ENCODE measurements at regions of chr17 and their contacts with region 1.

Region 1: GRCh38 chr17:73311781-73312641 is at the start of gene CDC42EP4:
- DNase-seq: peak; percentile 59 to 89 (median 82)
- ATAC-seq: peak; percentile 90
- H3K4me3 ChIP-seq: peak within 1 kb of the TSS; percentile 61 to 86
- H3K4me3 Mint-ChIP-seq: peak within 1 kb of the TSS; percentile 87
- H3K27ac ChIP-seq: peak within 1 kb of the TSS; percentile 11 to 64
- H3K27ac Mint-ChIP-seq: peak within 1 kb of the TSS; percentile 62
- H3K4me1 ChIP-seq: peaks cover 14% of the 10 kb centered on the region
- H3K4me1 Mint-ChIP-seq: peaks cover 17% of the 10 kb centered on the region
- H3K27me3 ChIP-seq: no peaks in the 10 kb centered on the region
- H3K27me3 Mint-ChIP-seq: no peaks in the 10 kb centered on the region
- CTCF ChIP-seq: no peak
- total RNA-seq, gene CDC42EP4: 3.5 to 4.4 TPM

Region 2: DNA sequence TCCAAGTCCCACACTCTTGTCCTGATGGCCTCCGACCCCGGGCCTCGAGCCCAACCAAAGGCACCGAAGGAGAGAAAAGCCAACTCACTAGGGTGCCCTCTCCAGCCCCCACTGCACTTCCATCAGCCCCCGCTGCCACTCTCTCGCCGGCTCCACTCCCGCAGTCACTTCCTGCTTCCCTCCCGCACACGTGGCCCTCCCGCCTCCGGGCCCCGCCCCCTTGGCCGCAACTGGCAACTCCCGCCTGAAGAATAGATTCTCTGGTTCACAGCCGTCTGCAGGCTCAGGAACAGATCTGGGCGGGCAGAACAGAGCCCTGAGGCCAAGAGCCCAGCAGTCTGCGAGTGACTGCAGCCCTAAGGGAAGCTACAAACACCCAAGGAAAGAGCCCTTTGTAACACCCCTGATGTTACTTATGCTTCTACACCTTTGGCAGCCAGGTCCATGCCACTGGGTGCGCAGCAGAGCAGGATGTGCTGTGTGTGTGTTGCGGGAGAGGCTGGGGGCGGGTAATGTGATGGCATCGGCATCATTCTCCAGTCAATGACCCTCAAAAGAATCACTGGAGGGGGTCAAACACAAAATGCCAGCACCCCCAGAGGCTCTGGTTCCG is 219.4 kb before region 1 on chr17 and contains the start of gene SLC39A11:
- CTCF ChIA-PET with region 1: no interaction called
- POLR2A ChIA-PET with region 1: no interaction called
- intact Hi-C with region 1: loop called in 1 of 2 experiments (anchors 5 kb)
- DNase-seq: peak; percentile 72 to 95 (median 89)
- ATAC-seq: peak; percentile 95
- H3K4me3 ChIP-seq: peak within 1 kb of the TSS; percentile 73 to 74
- H3K4me3 Mint-ChIP-seq: peak within 1 kb of the TSS; percentile 98
- H3K27ac ChIP-seq: peak within 1 kb of the TSS; percentile 41 to 58
- H3K27ac Mint-ChIP-seq: peak within 1 kb of the TSS; percentile 94
- H3K4me1 ChIP-seq: peaks cover 17% of the 10 kb centered on the region
- H3K4me1 Mint-ChIP-seq: peaks cover 33% of the 10 kb centered on the region
- H3K27me3 ChIP-seq: no peaks in the 10 kb centered on the region
- H3K27me3 Mint-ChIP-seq: no peaks in the 10 kb centered on the region
- CTCF ChIP-seq: no peak
- total RNA-seq, gene SLC39A11: 8.4 TPM

Region 3: GRCh38 chr17:73278465-73279453 is 33.3 kb before region 1 on chr17:
- CTCF ChIA-PET with region 1: no interaction called
- POLR2A ChIA-PET with region 1: no interaction called
- intact Hi-C with region 1: no loop called
- DNase-seq: no peak
- ATAC-seq: no peak
- H3K4me3 ChIP-seq: no peak overlapping the region
- H3K4me3 Mint-ChIP-seq: no peak overlapping the region
- H3K27ac ChIP-seq: no peak overlapping the region
- H3K27ac Mint-ChIP-seq: no peak overlapping the region
- H3K4me1 ChIP-seq: no peaks in the 10 kb centered on the region
- H3K4me1 Mint-ChIP-seq: no peaks in the 10 kb centered on the region
- H3K27me3 ChIP-seq: no peaks in the 10 kb centered on the region
- H3K27me3 Mint-ChIP-seq: peaks cover 6% of the 10 kb centered on the region
- CTCF ChIP-seq: no peak

Region 4: DNA sequence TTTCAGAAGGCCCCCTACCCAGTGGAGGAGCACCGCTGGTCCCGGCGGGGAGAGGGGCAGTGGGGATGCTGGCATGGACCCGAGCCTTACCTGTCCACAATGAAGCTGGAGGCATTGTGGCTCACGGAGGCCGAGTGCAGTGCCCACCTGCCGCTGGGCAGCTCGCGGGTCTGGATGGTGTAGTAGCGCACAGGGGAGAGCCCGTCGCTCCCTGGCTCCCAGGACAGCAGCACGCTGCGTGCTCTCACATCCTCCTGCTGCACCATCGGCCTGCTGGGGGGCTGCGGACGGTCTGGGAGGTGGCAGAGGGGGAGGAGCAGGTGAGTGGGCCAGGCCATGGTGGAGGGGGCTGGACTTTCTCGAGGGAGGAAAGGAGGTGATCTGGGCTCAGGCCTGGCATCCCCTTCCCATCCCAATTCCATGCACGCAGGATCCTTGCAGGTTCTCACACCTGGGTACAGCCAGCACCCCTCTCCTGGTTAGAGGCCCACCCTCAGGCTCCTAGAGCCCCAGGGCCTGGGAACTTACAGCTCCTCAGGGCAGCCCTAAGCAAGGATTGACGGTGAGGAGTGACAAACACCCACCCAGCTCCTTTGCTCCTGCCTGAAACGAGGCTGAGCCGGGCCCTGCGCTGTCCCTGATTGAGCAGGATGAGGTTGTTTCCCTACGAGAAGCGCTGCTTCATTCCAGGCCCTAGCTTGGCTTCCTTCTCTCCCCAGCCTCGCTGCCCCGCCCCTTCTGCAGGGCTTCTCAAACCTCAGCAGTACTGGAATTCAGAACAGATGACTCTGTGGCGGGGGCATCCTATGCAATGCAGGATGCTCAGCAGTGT is 76.0 kb after region 1 on chr17:
- CTCF ChIA-PET with region 1: no interaction called
- POLR2A ChIA-PET with region 1: no interaction called
- intact Hi-C with region 1: no loop called
- DNase-seq: no peak
- ATAC-seq: no peak
- H3K4me3 ChIP-seq: no peak overlapping the region
- H3K4me3 Mint-ChIP-seq: no peak overlapping the region
- H3K27ac ChIP-seq: no peak overlapping the region
- H3K27ac Mint-ChIP-seq: no peak overlapping the region
- H3K4me1 ChIP-seq: no peaks in the 10 kb centered on the region
- H3K4me1 Mint-ChIP-seq: no peaks in the 10 kb centered on the region
- H3K27me3 ChIP-seq: no peaks in the 10 kb centered on the region
- H3K27me3 Mint-ChIP-seq: no peaks in the 10 kb centered on the region
- CTCF ChIP-seq: no peak

Region 5: GRCh38 chr17:73400915-73401545 is 89.0 kb after region 1 on chr17:
- CTCF ChIA-PET with region 1: no interaction called
- POLR2A ChIA-PET with region 1: no interaction called
- intact Hi-C with region 1: no loop called
- DNase-seq: no peak
- ATAC-seq: no peak
- H3K4me3 ChIP-seq: no peak overlapping the region
- H3K4me3 Mint-ChIP-seq: no peak overlapping the region
- H3K27ac ChIP-seq: no peak overlapping the region
- H3K27ac Mint-ChIP-seq: no peak overlapping the region
- H3K4me1 ChIP-seq: no peaks in the 10 kb centered on the region
- H3K4me1 Mint-ChIP-seq: no peaks in the 10 kb centered on the region
- H3K27me3 ChIP-seq: no peaks in the 10 kb centered on the region
- H3K27me3 Mint-ChIP-seq: no peaks in the 10 kb centered on the region
- CTCF ChIP-seq: no peak